Endothelial cell of umbilical vein (primary cell): ENCODE measurements at regions of chr6 and their contacts with region 1.

Region 1: GRCh38 chr6:106546691-106547414 is 82.4 kb downstream of the RTN4IP1 start:
- DNase-seq: peak; percentile 94
- H3K4me3 ChIP-seq: peak overlapping the region in 1 of 3 experiments; percentile 10
- H3K27ac ChIP-seq: peak overlapping the region; percentile 99
- H3K4me1 ChIP-seq: peaks cover 29% of the 10 kb centered on the region
- H3K27me3 ChIP-seq: no peaks in the 10 kb centered on the region
- CTCF ChIP-seq: no peak
- POLR2A ChIP-seq: peak; percentile 30

Region 2: GRCh38 chr6:105459049-105459448 is 1087.8 kb before region 1 on chr6:
- CTCF ChIA-PET with region 1: no interaction called
- POLR2A ChIA-PET with region 1: no interaction called
- dilution Hi-C with region 1: no loop called
- intact Hi-C with region 1: loop called (anchors 1 kb)
- DNase-seq: peak; percentile 22
- H3K4me3 ChIP-seq: no peak overlapping the region
- H3K27ac ChIP-seq: peak overlapping the region; percentile 81
- H3K4me1 ChIP-seq: peaks cover 25% of the 10 kb centered on the region
- H3K27me3 ChIP-seq: no peaks in the 10 kb centered on the region
- CTCF ChIP-seq: no peak
- POLR2A ChIP-seq: no peak

Region 3: DNA sequence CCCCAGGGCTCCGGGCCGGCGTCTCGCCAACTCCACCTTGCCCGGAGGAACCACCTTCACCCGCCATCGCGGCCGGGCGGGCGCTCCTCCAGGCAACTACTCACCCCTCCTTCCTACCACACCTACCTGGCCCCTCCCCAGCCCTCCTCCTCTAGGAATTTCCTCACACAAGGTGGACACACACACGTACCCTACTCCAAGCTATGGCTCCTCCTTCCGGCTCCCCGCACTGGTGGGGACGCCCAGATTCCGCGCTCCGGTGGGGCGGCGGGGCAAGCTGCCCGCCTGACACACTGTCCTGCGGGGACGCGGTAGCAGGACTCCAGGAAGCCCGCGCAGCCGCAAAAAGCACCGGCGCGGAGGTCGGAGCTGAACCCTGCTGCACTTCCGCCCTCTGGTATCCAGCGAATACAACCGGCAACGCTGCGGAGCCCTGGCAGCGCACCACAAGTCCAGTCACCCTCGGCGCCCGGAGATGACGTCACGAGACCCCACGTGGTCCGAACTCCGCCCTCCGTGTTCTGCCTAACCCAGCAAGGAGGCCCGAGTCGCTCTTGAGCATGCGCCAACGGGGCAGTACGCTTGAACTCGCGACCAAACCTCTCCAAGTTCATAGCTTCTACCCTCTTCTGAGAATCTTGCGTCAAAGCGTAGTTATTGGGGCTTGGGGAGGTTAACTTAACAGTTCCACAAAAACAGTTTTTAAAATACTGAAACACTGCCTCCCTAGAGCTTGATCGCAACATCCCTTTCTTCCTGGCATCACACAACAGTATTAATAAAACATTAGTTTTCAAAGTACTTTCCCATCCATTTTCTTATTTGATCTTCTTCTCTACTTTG is 221.3 kb before region 1 on chr6 and contains the start of gene ATG5:
- CTCF ChIA-PET with region 1: no interaction called
- POLR2A ChIA-PET with region 1: no interaction called
- dilution Hi-C with region 1: no loop called
- intact Hi-C with region 1: loop called (anchors 2 kb)
- DNase-seq: peak; percentile 99
- H3K4me3 ChIP-seq: peak within 1 kb of the TSS; percentile 81 to 93 (median 84)
- H3K27ac ChIP-seq: peak within 1 kb of the TSS; percentile 77
- H3K4me1 ChIP-seq: peaks cover 6% of the 10 kb centered on the region
- H3K27me3 ChIP-seq: peaks cover 2 to 13% of the 10 kb centered on the region in 2 experiments
- CTCF ChIP-seq: no peak
- POLR2A ChIP-seq: peak; percentile 79
- total RNA-seq, gene ATG5: 32.8 and 35.9 TPM in 2 replicates

Region 4: GRCh38 chr6:106377061-106377540 is 169.8 kb before region 1 on chr6:
- CTCF ChIA-PET with region 1: no interaction called
- POLR2A ChIA-PET with region 1: no interaction called
- dilution Hi-C with region 1: no loop called
- intact Hi-C with region 1: no loop called
- DNase-seq: peak; percentile 84
- H3K4me3 ChIP-seq: no peak overlapping the region
- H3K27ac ChIP-seq: no peak overlapping the region
- H3K4me1 ChIP-seq: peaks cover 14% of the 10 kb centered on the region
- H3K27me3 ChIP-seq: peaks cover 0 to 10% of the 10 kb centered on the region in 2 experiments
- CTCF ChIP-seq: no peak
- POLR2A ChIP-seq: no peak

Region 5: DNA sequence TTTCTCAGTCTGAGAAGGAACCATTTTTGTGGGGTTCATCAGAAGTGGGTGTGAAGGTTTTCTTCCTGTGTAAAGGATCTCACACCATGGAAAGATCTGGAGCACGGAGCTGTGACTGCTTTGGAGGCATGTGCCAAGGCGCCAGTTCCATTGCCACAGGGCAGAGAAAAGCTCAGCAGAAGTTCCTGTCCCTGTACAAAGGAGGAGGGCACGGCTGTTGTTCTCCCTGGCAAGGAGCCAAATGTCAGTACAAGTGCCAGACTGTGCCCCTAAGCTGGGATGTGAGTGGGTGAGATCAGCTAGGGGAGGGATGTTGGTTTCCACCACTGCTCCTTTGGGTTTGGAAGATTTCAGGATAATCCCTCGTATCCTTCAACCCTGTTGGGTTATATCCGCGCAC is 69.1 kb before region 1 on chr6:
- CTCF ChIA-PET with region 1: no interaction called
- POLR2A ChIA-PET with region 1: no interaction called
- dilution Hi-C with region 1: no loop called
- intact Hi-C with region 1: no loop called
- DNase-seq: no peak
- H3K4me3 ChIP-seq: no peak overlapping the region
- H3K27ac ChIP-seq: no peak overlapping the region
- H3K4me1 ChIP-seq: no peaks in the 10 kb centered on the region
- H3K27me3 ChIP-seq: peaks cover 2 to 3% of the 10 kb centered on the region in 2 experiments
- CTCF ChIP-seq: no peak
- POLR2A ChIP-seq: no peak

Region 6: DNA sequence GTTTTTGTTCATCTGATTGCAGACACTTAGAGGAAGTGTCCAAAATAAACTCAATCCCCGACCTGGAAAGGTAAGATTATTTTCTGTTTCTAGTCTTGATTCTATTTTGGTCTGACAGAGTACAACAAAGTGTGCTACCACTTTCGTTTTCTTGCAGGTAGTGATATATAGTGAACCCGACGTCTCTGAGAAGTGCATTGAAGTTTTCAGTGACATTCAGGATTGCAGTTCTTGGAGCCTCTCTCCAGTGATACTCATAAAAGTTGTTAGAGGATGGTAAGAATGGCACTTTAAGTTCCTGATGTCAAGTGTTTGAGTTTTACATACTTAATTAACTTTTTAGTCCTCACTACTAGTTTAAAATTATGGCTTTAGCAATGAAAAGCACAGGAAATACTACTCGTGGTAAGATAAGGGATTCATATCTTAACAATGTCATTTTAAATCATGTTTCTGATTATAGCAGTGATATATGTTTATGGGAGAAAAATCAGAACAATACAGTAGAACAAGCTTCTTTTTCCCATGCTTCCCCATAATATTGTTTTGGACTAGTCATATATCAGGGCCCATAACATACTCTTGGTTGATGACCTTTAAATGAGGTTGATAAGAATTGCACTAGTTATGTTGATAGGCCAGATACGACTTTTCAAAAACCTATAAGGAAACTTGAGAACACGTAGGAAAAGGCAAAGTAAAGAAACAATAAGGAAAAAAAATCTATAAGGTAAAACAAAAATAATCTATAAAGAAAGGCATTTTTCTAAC is 21.6 kb before region 1 on chr6:
- CTCF ChIA-PET with region 1: interaction called, 4 read pairs
- POLR2A ChIA-PET with region 1: interaction called, 3 read pairs
- dilution Hi-C with region 1: no loop called
- intact Hi-C with region 1: loop called (anchors 1 kb)
- DNase-seq: peak; percentile 70
- H3K4me3 ChIP-seq: peak overlapping the region in 2 of 3 experiments; percentile 10 to 41
- H3K27ac ChIP-seq: peak overlapping the region; percentile 31
- H3K4me1 ChIP-seq: peaks cover 43% of the 10 kb centered on the region
- H3K27me3 ChIP-seq: no peaks in the 10 kb centered on the region
- CTCF ChIP-seq: no peak
- POLR2A ChIP-seq: no peak

Region 7: DNA sequence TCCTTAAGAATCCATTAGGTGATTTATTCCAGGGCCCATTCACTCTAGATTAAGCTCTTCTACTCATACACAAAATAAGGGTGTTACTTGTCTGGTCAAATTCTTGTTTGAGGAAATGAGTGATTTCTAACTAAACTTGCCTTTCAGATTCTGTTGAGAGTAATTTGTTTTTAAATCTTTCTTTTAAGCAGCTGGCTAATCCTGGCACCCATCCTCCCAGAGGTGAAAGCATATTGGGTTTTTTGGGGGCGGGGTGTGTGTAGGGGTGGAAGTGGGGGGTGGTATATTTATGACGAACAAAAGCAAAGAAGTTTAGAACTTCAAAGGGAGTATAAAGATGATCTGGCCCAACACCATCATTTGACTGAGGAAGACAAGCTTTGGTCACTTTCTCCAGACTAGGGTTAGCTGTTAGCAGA is 12.3 kb before region 1 on chr6:
- CTCF ChIA-PET with region 1: interaction called, 4 read pairs
- POLR2A ChIA-PET with region 1: no interaction called
- dilution Hi-C with region 1: no loop called
- intact Hi-C with region 1: loop called (anchors 1 kb)
- DNase-seq: no peak
- H3K4me3 ChIP-seq: no peak overlapping the region
- H3K27ac ChIP-seq: no peak overlapping the region
- H3K4me1 ChIP-seq: peaks cover 21% of the 10 kb centered on the region
- H3K27me3 ChIP-seq: no peaks in the 10 kb centered on the region
- CTCF ChIP-seq: no peak
- POLR2A ChIP-seq: no peak

Region 8: GRCh38 chr6:106704327-106704726 is 157.5 kb after region 1 on chr6:
- CTCF ChIA-PET with region 1: no interaction called
- POLR2A ChIA-PET with region 1: no interaction called
- dilution Hi-C with region 1: no loop called
- intact Hi-C with region 1: no loop called
- DNase-seq: no peak
- H3K4me3 ChIP-seq: no peak overlapping the region
- H3K27ac ChIP-seq: no peak overlapping the region
- H3K4me1 ChIP-seq: no peaks in the 10 kb centered on the region
- H3K27me3 ChIP-seq: no peaks in the 10 kb centered on the region
- CTCF ChIP-seq: no peak
- POLR2A ChIP-seq: no peak